ENCODE measurements at regions of chr6 and their contacts with region 1.

Region 1: GRCh38 chr6:28053584-28053983 is 26.8 kb upstream of the ZNF165 start:
- DNase-seq: no peak
- H3K4me3 ChIP-seq: no peak overlapping the region
- H3K27ac ChIP-seq: no peak overlapping the region
- H3K4me1 ChIP-seq: no peaks in the 10 kb centered on the region
- H3K27me3 ChIP-seq: peaks cover 0 to 12% (median 0%) of the 10 kb centered on the region in 3 donors
- CTCF ChIP-seq: no peak
- EP300 ChIP-seq: no peak
- POLR2A ChIP-seq: no peak

Region 2: DNA sequence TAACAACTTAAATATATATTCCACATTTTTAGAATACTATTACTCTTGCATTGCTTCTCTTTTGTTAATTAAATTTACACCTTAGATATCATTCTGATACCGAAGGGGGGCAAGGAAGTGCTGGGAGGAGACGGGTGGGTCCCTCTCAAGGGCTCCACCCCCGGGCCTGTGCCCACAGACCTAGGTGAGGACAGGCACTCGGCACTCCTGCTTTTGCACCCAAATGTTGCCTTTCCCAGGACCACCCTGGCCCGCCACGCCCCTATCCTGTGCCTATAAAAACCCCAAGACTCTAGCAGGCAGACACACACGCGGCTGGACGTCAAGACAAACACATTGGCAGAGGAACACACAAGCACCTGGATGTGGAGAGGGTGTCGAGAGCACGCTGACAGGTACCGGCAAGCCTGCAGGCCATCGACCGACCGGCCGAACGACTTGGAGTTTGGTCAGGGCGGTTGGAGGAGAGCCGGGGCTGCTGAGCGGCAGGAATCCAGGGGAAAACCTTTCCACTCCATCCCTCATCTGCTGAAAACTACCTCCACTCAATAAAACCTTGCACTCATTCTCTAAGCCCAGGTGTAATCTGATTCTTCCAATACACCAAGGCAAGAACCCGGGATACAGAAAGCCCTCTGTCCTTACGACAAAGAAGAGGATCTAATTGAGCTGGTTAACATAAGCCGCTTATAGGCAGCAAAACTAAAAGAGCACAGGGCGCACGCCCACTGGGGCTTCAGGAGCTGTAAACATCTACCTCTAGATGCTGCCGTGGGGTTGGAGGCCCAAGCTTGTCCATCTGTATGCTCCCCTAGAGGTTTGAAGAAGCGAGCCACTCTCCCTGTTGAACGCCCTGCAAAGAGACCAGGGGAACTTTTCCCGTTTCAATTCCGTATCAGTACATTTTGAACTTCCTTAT is 1003.5 kb before region 1 on chr6:
- intact Hi-C with region 1: loop called (anchors 10 kb)
- DNase-seq: peak in 1 of 2 donors; percentile 35
- H3K4me3 ChIP-seq: no peak overlapping the region
- H3K27ac ChIP-seq: no peak overlapping the region
- H3K4me1 ChIP-seq: no peaks in the 10 kb centered on the region
- H3K27me3 ChIP-seq: peaks cover 0 to 37% (median 0%) of the 10 kb centered on the region in 3 donors
- CTCF ChIP-seq: no peak
- EP300 ChIP-seq: no peak
- POLR2A ChIP-seq: no peak

Measured in stomach (tissue), 19 donors.